ENCODE measurements at regions of chr11 and their contacts with region 1.

Region 1: GRCh38 chr11:65134386-65135253 is at the start of gene SYVN1:
- H3K4me3 ChIP-seq: peak within 1 kb of the TSS; percentile 81
- H3K27ac ChIP-seq: peak within 1 kb of the TSS; percentile 83
- H3K4me1 ChIP-seq: no peaks in the 10 kb centered on the region; the same call in 1 of the 2 replicates
- CTCF ChIP-seq: no peak

Region 2: DNA sequence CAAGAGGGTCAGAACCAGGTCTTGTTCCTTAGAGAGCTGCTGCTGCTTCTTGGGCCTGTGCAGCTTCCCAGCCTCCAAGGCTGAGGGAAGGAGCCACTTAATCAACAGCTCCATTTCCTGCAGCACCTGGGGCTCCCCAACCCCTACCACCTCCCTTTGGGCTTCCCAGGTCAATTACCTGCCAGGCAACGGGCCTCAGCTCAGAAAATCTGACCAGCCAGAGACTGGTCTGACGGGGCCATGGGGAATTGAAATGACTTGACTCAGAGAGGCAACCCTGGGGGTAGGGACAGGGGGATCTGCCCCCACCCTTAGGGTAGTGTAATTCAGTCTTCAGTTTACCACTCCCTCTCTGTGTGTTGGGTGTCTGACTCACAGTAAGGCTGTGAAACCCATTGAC is 158.0 kb before region 1 on chr11:
- CTCF ChIA-PET with region 1: no interaction called
- POLR2A ChIA-PET with region 1: no interaction called
- H3K4me3 ChIP-seq: no peak overlapping the region
- H3K27ac ChIP-seq: no peak overlapping the region
- H3K4me1 ChIP-seq: no peaks in the 10 kb centered on the region
- CTCF ChIP-seq: no peak

Region 3: DNA sequence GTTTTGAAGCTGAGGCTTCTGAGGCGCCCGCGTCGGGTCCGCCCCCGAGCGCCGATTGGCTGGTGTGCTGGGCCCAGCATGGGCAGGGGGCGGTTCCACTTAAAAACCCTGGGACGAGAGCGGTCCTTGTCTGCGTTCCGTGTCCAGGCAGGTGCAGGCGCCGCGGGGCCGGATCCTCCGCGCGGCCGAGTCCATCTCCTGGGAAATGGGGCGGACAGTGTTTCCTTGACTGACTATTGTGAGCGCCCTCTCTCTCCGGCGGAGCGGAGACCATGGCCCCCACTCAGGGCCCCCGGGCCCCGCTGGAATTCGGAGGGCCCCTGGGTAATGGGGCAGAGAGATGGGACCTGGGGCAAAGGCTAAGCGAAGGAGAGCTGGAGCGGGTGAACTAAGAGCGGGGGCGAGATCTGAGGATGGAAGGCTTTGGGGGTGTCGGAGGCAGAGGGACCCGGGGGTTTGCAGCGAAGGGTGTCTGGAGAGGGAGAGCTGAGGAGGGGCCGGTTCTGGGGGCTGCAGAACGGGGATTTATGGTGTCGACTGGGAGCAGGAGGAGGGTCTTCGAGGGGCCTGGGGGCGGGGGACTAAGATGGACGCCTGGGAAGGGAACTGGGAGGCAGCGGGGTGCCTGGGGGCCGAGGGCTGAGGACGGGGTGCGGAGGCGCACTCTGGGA is 22.7 kb before region 1 on chr11 and contains the start of gene TM7SF2:
- CTCF ChIA-PET with region 1: interaction called, 3 read pairs
- POLR2A ChIA-PET with region 1: interaction called, 10 read pairs
- H3K4me3 ChIP-seq: peak within 1 kb of the TSS; percentile 67
- H3K27ac ChIP-seq: peak within 1 kb of the TSS; percentile 72
- H3K4me1 ChIP-seq: peaks cover 6% of the 10 kb centered on the region
- CTCF ChIP-seq: no peak

Region 4: GRCh38 chr11:65180877-65181568 is 46.4 kb after region 1 on chr11:
- CTCF ChIA-PET with region 1: interaction called, 3 read pairs
- POLR2A ChIA-PET with region 1: interaction called, 19 read pairs
- H3K4me3 ChIP-seq: peak overlapping the region; percentile 91
- H3K27ac ChIP-seq: peak overlapping the region; percentile 36; the same call in 1 of the 2 replicates
- H3K4me1 ChIP-seq: no peaks in the 10 kb centered on the region
- CTCF ChIP-seq: peak; percentile 69

Region 5: DNA sequence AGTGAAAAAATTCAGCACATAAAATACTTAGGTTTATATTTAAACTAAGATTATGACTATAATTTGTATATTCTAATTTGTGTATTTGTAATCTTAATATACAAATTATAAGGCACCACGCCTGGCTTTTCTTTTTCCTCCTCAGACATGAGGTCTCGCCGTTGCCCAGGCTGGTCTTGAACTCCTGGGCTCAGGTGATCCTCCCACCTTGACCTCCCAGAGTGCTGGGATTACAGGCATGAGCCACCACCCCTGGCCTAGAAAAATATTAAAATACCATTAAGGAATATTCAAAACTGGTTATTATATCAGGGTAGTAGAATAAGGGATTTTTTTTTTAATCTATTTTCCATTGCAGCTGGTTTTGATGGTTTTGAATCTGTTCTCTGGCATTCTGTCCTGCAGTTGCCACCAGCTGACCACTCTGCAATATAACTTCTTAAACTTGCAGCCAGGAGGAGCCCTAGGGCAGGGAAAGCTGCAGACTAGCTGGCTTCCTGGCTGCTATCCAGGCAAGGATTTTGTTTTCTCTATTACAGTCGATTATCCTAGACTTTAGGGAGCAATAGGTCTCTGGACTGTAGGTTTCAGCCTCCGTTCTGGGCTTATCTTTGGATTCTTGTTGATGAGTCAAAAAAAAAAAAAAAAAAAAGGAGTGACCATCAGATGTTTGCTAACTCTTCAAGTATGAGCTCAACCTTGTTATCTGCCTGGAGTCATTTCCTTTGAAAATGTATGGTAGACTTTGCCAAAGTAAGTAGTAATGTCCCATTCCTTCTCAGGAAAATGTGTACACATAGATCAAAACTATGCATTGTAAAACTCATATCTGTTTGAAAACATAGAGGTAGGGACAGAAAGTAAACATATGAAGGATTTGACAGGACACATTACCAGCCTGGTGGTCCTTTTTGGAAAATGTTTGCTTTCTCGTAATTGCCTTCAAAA is 140.4 kb after region 1 on chr11:
- CTCF ChIA-PET with region 1: no interaction called
- POLR2A ChIA-PET with region 1: interaction called, 10 read pairs
- H3K4me3 ChIP-seq: no peak overlapping the region
- H3K27ac ChIP-seq: no peak overlapping the region
- H3K4me1 ChIP-seq: no peaks in the 10 kb centered on the region
- CTCF ChIP-seq: 0 out of 2 replicates have a peak, but pooled peaks have one; percentile 43